ENCODE measurements at regions of chr16 and their contacts with region 1.

Region 1: GRCh38 chr16:12819126-12820117 is 15.7 kb upstream of the CPPED1 start:
- DNase-seq: peak; percentile 63
- ATAC-seq: peak; percentile 45; the same call in 1 of the 2 replicates
- H3K4me3 ChIP-seq: no peak overlapping the region
- H3K27ac ChIP-seq: no peak overlapping the region
- H3K4me1 ChIP-seq: no peaks in the 10 kb centered on the region
- H3K27me3 ChIP-seq: no peaks in the 10 kb centered on the region
- CTCF ChIP-seq: peak; percentile 69

Region 2: GRCh38 chr16:12340151-12340733 is 479.2 kb before region 1 on chr16:
- CTCF ChIA-PET with region 1: no interaction called
- POLR2A ChIA-PET with region 1: no interaction called
- intact Hi-C with region 1: loop called (anchors 5 kb)
- DNase-seq: peak; percentile 60
- ATAC-seq: 0 out of 2 replicates have a peak, but pooled peaks have one; percentile 4
- H3K4me3 ChIP-seq: no peak overlapping the region
- H3K27ac ChIP-seq: peak overlapping the region; percentile 97
- H3K4me1 ChIP-seq: peaks cover 32% of the 10 kb centered on the region
- H3K27me3 ChIP-seq: no peaks in the 10 kb centered on the region
- CTCF ChIP-seq: peak; percentile 75

Region 3: GRCh38 chr16:12455287-12455798 is 364.1 kb before region 1 on chr16:
- CTCF ChIA-PET with region 1: no interaction called
- POLR2A ChIA-PET with region 1: no interaction called
- intact Hi-C with region 1: loop called (anchors 1 kb)
- DNase-seq: peak; percentile 66
- ATAC-seq: peak; percentile 98
- H3K4me3 ChIP-seq: no peak overlapping the region
- H3K27ac ChIP-seq: no peak overlapping the region
- H3K4me1 ChIP-seq: peaks cover 6% of the 10 kb centered on the region
- H3K27me3 ChIP-seq: no peaks in the 10 kb centered on the region
- CTCF ChIP-seq: peak; percentile 76

Region 4: GRCh38 chr16:12573730-12574383 is 245.6 kb before region 1 on chr16:
- CTCF ChIA-PET with region 1: no interaction called
- POLR2A ChIA-PET with region 1: no interaction called
- intact Hi-C with region 1: loop called (anchors 1 kb)
- DNase-seq: peak; percentile 61
- ATAC-seq: peak; percentile 43
- H3K4me3 ChIP-seq: no peak overlapping the region
- H3K27ac ChIP-seq: no peak overlapping the region
- H3K4me1 ChIP-seq: no peaks in the 10 kb centered on the region
- H3K27me3 ChIP-seq: no peaks in the 10 kb centered on the region
- CTCF ChIP-seq: peak; percentile 76

Region 5: DNA sequence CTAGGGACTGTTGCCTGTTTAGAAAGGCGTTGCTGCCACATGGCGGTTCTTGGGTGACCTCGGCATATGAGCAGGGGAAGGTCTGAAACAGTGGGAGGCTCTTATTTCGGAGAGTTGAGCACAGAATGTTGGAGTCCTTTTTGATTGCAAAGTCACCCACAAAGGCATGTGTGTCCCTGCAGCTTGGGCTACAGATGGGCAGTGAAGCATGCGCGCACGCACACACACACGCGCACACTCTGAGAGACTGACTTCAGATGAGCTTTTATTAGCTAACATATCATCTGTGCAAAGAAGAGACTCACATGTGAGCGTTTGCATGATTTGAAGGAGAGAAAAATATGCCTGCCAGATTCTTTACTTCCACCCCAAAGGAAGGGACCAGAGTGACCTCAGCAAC is 186.4 kb after region 1 on chr16:
- CTCF ChIA-PET with region 1: no interaction called
- POLR2A ChIA-PET with region 1: no interaction called
- intact Hi-C with region 1: no loop called
- DNase-seq: no peak
- ATAC-seq: no peak
- H3K4me3 ChIP-seq: no peak overlapping the region
- H3K27ac ChIP-seq: no peak overlapping the region
- H3K4me1 ChIP-seq: no peaks in the 10 kb centered on the region
- H3K27me3 ChIP-seq: peaks cover 9% of the 10 kb centered on the region; the same call in 1 of the 2 replicates
- CTCF ChIP-seq: no peak